HepG2 (cell line): ENCODE measurements at regions of chr18 and their contacts with region 1.

Region 1: DNA sequence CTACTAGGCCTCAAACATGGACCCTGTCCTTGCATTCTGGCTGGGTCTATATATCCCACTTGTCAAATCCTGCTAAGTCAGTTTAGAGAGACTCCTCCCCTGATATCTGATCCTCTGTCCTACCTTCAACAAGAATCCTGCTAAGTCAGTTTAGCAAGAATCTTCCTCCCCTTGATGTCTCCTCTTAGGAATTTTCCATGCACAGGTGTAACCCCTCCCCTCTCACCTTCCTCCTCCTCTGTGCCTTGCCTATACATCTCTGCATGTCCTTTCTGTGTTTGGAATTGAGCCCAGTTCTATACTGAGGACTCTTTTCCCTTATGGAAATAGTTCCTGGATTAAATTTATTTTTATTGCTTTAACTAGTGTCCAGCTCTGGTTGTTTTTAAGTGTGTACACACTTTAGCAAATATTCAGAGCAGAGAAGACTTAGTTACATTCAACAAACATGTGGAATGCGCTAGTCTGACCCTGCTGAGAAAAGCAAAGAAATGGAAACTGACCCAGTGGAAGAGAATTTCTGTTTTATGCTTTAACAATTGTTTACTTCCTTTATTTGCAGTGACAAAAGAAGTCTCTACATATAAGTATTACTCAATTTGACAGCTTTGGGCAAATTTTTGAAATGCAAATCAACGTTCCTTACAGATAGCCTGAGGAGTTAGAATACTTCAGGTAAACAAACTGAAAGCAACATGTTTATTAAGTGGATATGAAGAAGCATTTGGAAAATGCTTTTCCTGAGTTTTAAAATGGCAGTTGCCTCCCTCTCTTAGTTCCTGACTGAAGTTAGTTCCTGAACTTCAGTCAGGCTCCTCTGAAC is 80.6 kb downstream of the RIT2 start:
- DNase-seq: no peak
- ATAC-seq: no peak
- H3K4me3 ChIP-seq: no peak overlapping the region
- H3K27ac ChIP-seq: no peak overlapping the region
- H3K4me1 ChIP-seq: no peaks in the 10 kb centered on the region
- H3K27me3 ChIP-seq: no peaks in the 10 kb centered on the region
- CTCF ChIP-seq: no peak
- EP300 ChIP-seq: no peak
- POLR2A ChIP-seq: no peak
- RAD21 ChIP-seq: no peak

Region 2: GRCh38 chr18:43271593-43272432 is 236.9 kb after region 1 on chr18:
- CTCF ChIA-PET with region 1: no interaction called
- POLR2A ChIA-PET with region 1: no interaction called
- in situ Hi-C with region 1: no loop called
- intact Hi-C with region 1: loop called (anchors 10 kb)
- DNase-seq: peak; percentile 35
- ATAC-seq: no peak
- H3K4me3 ChIP-seq: no peak overlapping the region
- H3K27ac ChIP-seq: no peak overlapping the region
- H3K4me1 ChIP-seq: no peaks in the 10 kb centered on the region
- H3K27me3 ChIP-seq: no peaks in the 10 kb centered on the region
- CTCF ChIP-seq: peak; percentile 60
- EP300 ChIP-seq: no peak
- POLR2A ChIP-seq: no peak
- RAD21 ChIP-seq: no peak; the same call in 1 of the 2 replicates